HepG2 (cell line): ENCODE measurements at regions of chr7 and their contacts with region 1.

Region 1: DNA sequence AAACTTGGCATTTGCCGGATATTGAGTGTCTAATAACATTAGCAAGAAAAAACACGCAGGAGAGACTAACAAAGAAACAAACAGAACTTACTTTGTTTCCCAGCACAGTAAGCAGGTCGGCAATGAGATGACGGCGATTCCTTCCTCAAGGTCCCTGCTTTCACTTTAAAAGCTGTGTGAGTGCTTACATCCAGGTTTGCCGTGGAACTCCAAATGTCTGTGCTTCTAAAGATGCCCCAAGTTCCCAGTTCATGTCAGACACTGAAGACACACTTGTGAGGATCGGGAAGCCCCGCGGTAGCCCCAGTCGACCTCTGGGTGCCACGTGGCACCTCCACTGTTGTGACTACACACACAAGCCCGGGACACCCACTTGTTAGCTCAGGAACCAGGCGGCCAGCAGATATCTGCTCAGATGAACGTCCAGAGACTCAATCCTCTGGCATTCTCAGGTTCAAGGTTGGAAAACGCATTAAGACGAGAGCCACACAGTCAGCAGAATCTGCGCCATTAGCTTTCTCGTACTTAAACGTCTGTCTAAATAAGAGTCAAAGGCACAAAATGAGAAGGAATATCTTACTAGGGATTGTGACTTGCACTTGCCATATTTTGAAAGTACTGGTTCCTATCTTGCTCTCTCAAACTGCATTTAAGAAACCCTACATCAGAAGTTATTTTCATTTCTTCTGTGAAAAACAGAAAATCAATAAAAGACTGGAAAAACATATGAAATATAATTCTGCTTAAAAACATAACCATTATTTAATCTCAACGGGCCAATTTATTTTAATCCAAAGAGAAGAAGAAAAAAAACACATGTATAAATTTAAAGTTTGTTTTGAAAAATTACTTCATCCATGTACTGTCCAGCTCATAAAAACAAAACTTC is 207.6 kb upstream of the KLF14 start:
- DNase-seq: peak; percentile 75
- ATAC-seq: peak; percentile 91
- H3K4me3 ChIP-seq: peak overlapping the region; percentile 51 to 69 (median 68)
- H3K27ac ChIP-seq: peak overlapping the region; percentile 90
- H3K4me1 ChIP-seq: peaks cover 81% of the 10 kb centered on the region
- H3K27me3 ChIP-seq: no peaks in the 10 kb centered on the region
- CTCF ChIP-seq: no peak
- EP300 ChIP-seq: no peak; a peak in 1 of 4 replicates
- POLR2A ChIP-seq: peak; percentile 40 to 69; a peak in 3 of 4 replicates
- RAD21 ChIP-seq: no peak; the same call in 1 of the 2 replicates

Region 2: DNA sequence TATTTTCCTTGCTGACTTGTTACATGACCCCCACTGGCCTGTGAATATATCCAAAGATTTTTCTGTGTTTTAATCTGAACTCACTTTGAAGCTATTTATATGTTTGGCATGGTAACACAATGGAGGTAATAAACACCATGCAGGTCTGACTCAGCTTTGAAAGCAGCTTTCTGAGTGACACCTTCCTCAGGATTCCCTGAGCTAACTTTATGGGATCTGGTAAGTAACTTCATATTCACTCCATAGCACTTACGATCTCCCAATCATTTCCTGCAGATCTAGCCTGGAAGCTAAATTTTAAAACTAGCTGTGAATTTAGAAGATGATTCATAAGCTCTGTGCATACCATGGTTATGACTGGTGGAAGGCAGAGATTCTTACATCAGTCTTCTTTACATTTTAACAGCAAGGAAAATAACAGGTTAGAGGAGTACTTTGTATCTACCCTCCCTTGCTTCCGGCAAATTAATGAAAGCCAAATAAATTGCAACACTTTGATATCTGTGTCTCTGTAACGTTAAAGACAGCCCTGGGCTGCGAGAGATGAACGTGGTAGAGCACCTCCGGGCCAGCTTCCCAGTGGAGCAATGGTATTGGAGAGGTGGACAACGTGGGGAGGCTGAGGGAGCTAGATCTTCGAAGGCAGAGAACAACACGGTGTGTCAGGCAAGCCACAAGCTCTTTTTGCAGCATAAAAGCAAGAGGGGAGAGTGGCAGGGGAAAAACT is 37.4 kb before region 1 on chr7:
- CTCF ChIA-PET with region 1: no interaction called
- POLR2A ChIA-PET with region 1: interaction called, 11 read pairs
- in situ Hi-C with region 1: no loop called
- intact Hi-C with region 1: no loop called
- DNase-seq: peak; percentile 85
- ATAC-seq: peak; percentile 62
- H3K4me3 ChIP-seq: no peak overlapping the region; a peak in 1 of 6 replicates
- H3K27ac ChIP-seq: peak overlapping the region; percentile 78
- H3K4me1 ChIP-seq: peaks cover 97% of the 10 kb centered on the region
- H3K27me3 ChIP-seq: no peaks in the 10 kb centered on the region
- CTCF ChIP-seq: no peak
- EP300 ChIP-seq: peak in 1 of 2 experiments; percentile 82; a peak in 2 of 4 replicates
- POLR2A ChIP-seq: no peak
- RAD21 ChIP-seq: no peak

Region 3: GRCh38 chr7:130921391-130922180 is 20.0 kb before region 1 on chr7:
- CTCF ChIA-PET with region 1: no interaction called
- POLR2A ChIA-PET with region 1: interaction called, 13 read pairs
- in situ Hi-C with region 1: no loop called
- intact Hi-C with region 1: no loop called
- DNase-seq: no peak
- ATAC-seq: no peak
- H3K4me3 ChIP-seq: peak overlapping the region in 1 of 3 experiments; percentile 21; a peak in 1 of 6 replicates
- H3K27ac ChIP-seq: peak overlapping the region; percentile 78
- H3K4me1 ChIP-seq: peaks cover 95% of the 10 kb centered on the region
- H3K27me3 ChIP-seq: no peaks in the 10 kb centered on the region
- CTCF ChIP-seq: no peak
- EP300 ChIP-seq: no peak
- POLR2A ChIP-seq: no peak
- RAD21 ChIP-seq: no peak

Region 4: DNA sequence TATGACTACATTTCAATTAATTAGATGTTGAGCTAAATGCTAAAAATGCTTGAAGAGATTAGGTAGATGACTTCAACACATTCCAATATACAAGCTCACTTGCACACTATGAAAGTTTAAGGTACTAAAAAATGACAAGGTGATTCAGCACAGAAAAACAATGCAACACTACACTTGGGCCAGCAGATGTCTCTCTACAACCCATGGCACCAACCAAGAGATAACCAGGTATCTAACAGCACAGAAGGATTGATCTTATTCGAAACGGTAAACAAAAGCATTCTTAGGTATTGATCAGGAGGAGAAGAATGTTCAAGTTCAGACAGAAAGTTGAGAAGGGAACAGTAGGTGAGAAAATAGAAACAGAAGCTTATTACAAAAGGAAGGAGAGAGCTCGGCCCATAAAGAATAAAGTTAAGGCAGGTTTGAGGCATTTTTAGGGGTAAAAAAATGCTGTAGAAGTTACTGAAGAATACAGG is 40.6 kb after region 1 on chr7:
- CTCF ChIA-PET with region 1: no interaction called
- POLR2A ChIA-PET with region 1: no interaction called
- in situ Hi-C with region 1: no loop called
- intact Hi-C with region 1: no loop called
- DNase-seq: peak; percentile 56
- ATAC-seq: peak; percentile 79
- H3K4me3 ChIP-seq: no peak overlapping the region
- H3K27ac ChIP-seq: no peak overlapping the region
- H3K4me1 ChIP-seq: 0 out of 2 replicates have a peak, but pooled peaks cover 2% of the 10 kb centered on the region
- H3K27me3 ChIP-seq: no peaks in the 10 kb centered on the region
- CTCF ChIP-seq: peak; percentile 80
- EP300 ChIP-seq: no peak
- POLR2A ChIP-seq: no peak
- RAD21 ChIP-seq: peak; percentile 41; the same call in 1 of the 2 replicates

Region 5: GRCh38 chr7:130996841-130997231 is 55.3 kb after region 1 on chr7:
- CTCF ChIA-PET with region 1: no interaction called
- POLR2A ChIA-PET with region 1: no interaction called
- in situ Hi-C with region 1: no loop called
- intact Hi-C with region 1: loop called (anchors 5 kb)
- DNase-seq: peak; percentile 93
- ATAC-seq: peak; percentile 92
- H3K4me3 ChIP-seq: peak overlapping the region in 2 of 3 experiments; percentile 29 to 32; a peak in 3 of 6 replicates
- H3K27ac ChIP-seq: peak overlapping the region; percentile 68
- H3K4me1 ChIP-seq: peaks cover 65% of the 10 kb centered on the region
- H3K27me3 ChIP-seq: no peaks in the 10 kb centered on the region
- CTCF ChIP-seq: no peak
- EP300 ChIP-seq: peak in 1 of 2 experiments; percentile 76; a peak in 2 of 4 replicates
- POLR2A ChIP-seq: no peak
- RAD21 ChIP-seq: no peak

Region 6: DNA sequence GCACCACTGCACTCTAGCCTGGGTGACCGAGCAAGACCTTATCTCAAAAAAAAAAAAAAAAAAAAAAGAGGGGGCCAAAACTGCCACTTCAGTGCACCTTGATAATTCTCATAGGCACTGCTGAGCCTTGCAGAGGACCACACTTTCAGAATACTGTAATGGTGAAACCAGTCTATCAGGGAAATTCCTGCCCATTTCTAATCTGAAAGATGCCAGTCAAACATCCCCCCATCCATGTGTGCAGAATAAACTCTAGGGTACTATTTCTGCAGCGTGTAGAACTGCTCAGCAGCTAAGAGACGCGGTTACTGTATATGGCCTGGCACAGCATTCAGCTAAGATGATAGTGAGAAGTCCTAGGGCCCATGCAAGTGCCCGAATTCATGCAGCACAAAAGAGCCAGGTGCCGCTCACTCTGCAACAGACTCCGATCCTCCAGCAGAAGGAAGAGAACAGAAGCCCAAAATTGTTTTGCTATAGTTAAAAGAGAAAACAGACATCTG is 79.2 kb after region 1 on chr7:
- CTCF ChIA-PET with region 1: no interaction called
- POLR2A ChIA-PET with region 1: no interaction called
- in situ Hi-C with region 1: no loop called
- intact Hi-C with region 1: no loop called
- DNase-seq: no peak
- ATAC-seq: no peak
- H3K4me3 ChIP-seq: no peak overlapping the region
- H3K27ac ChIP-seq: no peak overlapping the region
- H3K4me1 ChIP-seq: peaks cover 16% of the 10 kb centered on the region
- H3K27me3 ChIP-seq: no peaks in the 10 kb centered on the region
- CTCF ChIP-seq: no peak
- EP300 ChIP-seq: no peak
- POLR2A ChIP-seq: no peak
- RAD21 ChIP-seq: no peak

Region 7: DNA sequence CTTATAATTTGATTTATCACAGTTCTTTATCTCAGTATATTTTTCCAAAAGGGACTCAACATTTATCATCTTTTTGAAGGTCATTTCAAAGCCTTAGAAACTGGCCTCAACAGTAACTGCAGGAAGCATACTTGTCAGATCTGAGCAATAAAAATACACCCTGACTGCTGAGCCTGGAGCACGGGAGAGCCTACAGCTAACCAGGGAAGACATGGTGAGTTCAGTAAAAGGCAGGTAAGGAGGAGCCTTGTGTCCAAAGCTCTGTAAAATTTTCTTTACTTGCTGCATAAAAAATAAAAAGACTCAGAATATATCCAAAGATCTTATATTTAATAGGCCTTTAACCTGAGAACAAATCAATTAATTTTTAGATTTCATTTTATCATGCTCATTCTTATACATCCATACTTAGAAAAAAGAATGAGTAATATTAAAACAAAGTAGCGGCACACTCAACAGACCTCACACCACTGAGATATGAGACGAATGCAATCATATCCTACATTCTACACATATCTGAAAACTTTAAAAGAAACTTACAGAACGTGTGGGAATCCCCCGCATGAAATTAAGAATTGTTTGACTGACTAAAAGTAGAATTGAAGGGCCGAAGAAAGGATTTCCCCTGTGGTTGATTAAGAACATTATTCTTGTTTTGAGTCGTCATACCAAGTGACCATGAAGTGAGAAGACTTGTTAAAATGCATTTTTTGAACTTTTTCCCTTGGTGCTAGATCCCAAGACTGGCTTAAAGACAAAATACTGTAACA is 89.7 kb after region 1 on chr7:
- CTCF ChIA-PET with region 1: no interaction called
- POLR2A ChIA-PET with region 1: no interaction called
- in situ Hi-C with region 1: no loop called
- intact Hi-C with region 1: no loop called
- DNase-seq: no peak
- ATAC-seq: no peak
- H3K4me3 ChIP-seq: no peak overlapping the region
- H3K27ac ChIP-seq: no peak overlapping the region
- H3K4me1 ChIP-seq: no peaks in the 10 kb centered on the region
- H3K27me3 ChIP-seq: no peaks in the 10 kb centered on the region
- CTCF ChIP-seq: no peak
- EP300 ChIP-seq: no peak
- POLR2A ChIP-seq: no peak
- RAD21 ChIP-seq: no peak

Region 8: GRCh38 chr7:131302876-131303707 is 361.5 kb after region 1 on chr7:
- CTCF ChIA-PET with region 1: no interaction called
- POLR2A ChIA-PET with region 1: no interaction called
- in situ Hi-C with region 1: no loop called
- intact Hi-C with region 1: no loop called
- DNase-seq: peak; percentile 16
- ATAC-seq: peak; percentile 66
- H3K4me3 ChIP-seq: no peak overlapping the region
- H3K27ac ChIP-seq: no peak overlapping the region
- H3K4me1 ChIP-seq: peaks cover 64% of the 10 kb centered on the region
- H3K27me3 ChIP-seq: no peaks in the 10 kb centered on the region
- CTCF ChIP-seq: peak; percentile 73
- EP300 ChIP-seq: no peak
- POLR2A ChIP-seq: no peak
- RAD21 ChIP-seq: peak; percentile 51